T47D (cell line): ENCODE measurements at regions of chr5 and their contacts with region 1.

Region 1: GRCh38 chr5:144915452-144915851 is 744.8 kb downstream of the KCTD16 start:
- DNase-seq: no peak

Region 2: GRCh38 chr5:144832416-144832815 is 83.0 kb before region 1 on chr5:
- in situ Hi-C with region 1: loop called (anchors 10 kb)
- DNase-seq: no peak